Naive thymus-derived CD8-positive, alpha-beta T cell (primary cell): ENCODE measurements at regions of chr6 and their contacts with region 1.

Region 1: DNA sequence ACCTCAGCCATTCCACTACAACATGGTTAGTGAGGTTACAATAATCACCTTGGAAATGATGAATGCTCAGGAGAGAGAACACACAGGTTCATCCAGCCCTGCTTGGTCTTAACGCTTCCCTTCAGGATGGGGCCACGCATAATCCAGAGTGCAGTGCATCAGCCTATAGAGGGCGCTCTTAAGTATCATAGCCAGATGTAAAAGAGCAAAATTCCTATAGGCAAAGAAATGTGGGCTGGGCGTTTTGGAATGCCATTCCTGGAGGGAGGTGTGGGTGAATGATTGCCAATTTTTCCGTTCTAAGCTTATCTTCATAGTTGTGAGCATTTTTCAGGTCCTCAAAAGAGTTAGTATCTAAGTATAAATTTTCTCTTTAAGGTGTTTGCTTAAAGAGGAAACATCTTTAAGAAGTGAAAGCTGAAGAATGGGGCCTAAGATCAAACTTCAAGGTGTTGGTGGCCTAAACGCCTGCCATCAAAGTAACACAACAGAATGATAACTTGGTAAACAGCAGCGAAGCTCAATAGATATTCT is 1.8 kb downstream of the RIPOR2 start:
- DNase-seq: peak in 8 of 10 donors; percentile 42 to 81 (median 65)
- ATAC-seq: peak; percentile 8 to 27
- H3K4me3 Mint-ChIP-seq: peak overlapping the region; percentile 81 to 99 (median 98)
- H3K27ac Mint-ChIP-seq: peak overlapping the region; percentile 87 to 98 (median 95)
- H3K4me1 Mint-ChIP-seq: peaks cover 29 to 69% (median 54%) of the 10 kb centered on the region in 4 donors
- H3K27me3 Mint-ChIP-seq: no peaks in the 10 kb centered on the region

Region 2: DNA sequence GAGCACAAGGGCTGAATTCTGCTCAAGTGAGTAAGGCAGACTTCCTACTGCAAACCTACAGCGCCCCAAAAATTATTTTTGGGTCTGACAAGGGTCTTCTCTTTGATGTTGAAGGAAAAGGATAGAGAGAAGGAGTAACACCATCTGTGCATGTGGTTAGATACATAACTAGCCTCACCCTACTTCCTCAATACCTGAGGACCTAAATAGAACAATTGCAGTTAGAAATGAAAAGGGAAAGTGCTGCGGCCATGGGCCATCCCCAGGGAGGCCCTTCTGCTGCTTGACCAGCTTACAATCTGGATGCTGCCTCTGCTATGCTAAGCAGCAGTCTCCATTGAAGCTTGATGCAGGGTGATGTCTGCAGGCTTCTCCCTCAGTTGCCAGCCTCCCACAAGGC is 72.0 kb before region 1 on chr6:
- POLR2A ChIA-PET with region 1: interaction called, 66 read pairs
- DNase-seq: no peak
- ATAC-seq: no peak
- H3K4me3 Mint-ChIP-seq: peak overlapping the region in 8 of 10 donors; percentile 2 to 73 (median 42)
- H3K27ac Mint-ChIP-seq: peak overlapping the region; percentile 84 to 98 (median 94)
- H3K4me1 Mint-ChIP-seq: peaks cover 46 to 98% (median 91%) of the 10 kb centered on the region in 4 donors
- H3K27me3 Mint-ChIP-seq: no peaks in the 10 kb centered on the region

Region 3: DNA sequence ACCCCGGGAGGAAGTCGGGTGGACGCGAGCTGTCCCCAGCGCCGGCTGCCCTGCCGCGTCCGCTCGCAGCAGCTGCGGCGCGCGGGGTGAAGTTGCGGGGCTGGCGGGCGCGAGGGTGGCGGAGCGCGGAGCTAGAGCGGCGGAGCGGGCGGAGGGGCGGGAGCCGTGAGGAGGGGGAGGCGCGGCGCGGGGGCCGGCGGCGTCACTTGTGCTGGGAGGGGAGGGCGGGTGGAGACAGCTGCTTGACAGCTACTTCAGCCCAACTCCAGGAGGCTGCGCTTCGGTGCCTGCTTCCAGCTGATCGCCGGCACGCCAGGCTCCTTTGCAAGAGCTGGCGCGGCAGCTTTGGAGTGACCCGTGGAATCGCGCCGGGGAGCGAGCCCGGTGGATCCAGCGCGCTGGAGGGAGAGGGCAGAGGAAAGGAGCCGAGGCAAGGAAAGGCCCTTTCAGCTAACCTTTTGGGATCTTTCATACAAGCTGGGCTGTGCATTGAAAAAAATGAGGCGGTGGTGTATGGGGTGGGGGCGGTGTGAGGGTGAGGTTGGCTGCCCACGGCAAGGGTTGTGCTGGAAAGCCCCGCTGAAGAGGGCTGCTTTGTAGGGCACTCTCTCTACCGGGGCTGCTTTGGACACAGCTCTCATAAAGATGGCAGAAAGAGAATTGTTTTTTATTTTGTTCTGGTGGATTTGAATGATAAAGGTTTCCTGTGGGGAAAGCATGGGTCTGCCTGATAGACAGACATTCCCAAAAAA is 22.8 kb before region 1 on chr6:
- POLR2A ChIA-PET with region 1: interaction called, 446 read pairs
- DNase-seq: peak in 5 of 10 donors; percentile 39 to 70 (median 56)
- ATAC-seq: peak; percentile 39 to 45
- H3K4me3 Mint-ChIP-seq: peak overlapping the region; percentile 81 to 99 (median 94)
- H3K27ac Mint-ChIP-seq: peak overlapping the region; percentile 96 to 99 (median 98)
- H3K4me1 Mint-ChIP-seq: peaks cover 75 to 100% (median 98%) of the 10 kb centered on the region in 4 donors
- H3K27me3 Mint-ChIP-seq: no peaks in the 10 kb centered on the region

Region 4: DNA sequence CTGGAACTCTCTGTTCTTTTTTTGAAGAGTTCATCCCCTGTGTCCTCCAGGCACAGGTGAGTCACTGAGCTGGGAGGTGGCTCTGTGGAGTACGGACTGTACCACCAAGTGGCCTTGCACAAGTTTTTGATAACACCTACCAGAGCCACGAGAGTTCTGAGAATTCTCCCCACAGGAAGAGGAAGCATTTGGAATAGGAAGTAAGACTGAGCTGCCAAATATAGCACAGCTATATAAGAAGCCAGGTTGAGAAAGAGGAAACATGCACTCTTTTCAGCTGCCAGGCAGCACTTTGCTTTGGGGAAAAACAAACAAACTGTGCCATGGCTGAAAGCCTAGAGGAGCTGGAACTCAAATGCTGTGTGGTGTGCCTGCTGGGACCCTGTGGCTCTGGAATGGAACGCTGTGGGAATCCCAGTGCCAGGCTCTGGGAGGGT is 72.6 kb after region 1 on chr6:
- POLR2A ChIA-PET with region 1: interaction called, 15 read pairs
- DNase-seq: peak in 5 of 10 donors; percentile 15 to 40 (median 28)
- ATAC-seq: peak; percentile 69 to 70
- H3K4me3 Mint-ChIP-seq: peak overlapping the region; percentile 38 to 81 (median 74)
- H3K27ac Mint-ChIP-seq: peak overlapping the region; percentile 71 to 96 (median 91)
- H3K4me1 Mint-ChIP-seq: peaks cover 44 to 80% (median 75%) of the 10 kb centered on the region in 4 donors
- H3K27me3 Mint-ChIP-seq: no peaks in the 10 kb centered on the region